ENCODE measurements at regions of chr13 and their contacts with region 1.

Region 1: DNA sequence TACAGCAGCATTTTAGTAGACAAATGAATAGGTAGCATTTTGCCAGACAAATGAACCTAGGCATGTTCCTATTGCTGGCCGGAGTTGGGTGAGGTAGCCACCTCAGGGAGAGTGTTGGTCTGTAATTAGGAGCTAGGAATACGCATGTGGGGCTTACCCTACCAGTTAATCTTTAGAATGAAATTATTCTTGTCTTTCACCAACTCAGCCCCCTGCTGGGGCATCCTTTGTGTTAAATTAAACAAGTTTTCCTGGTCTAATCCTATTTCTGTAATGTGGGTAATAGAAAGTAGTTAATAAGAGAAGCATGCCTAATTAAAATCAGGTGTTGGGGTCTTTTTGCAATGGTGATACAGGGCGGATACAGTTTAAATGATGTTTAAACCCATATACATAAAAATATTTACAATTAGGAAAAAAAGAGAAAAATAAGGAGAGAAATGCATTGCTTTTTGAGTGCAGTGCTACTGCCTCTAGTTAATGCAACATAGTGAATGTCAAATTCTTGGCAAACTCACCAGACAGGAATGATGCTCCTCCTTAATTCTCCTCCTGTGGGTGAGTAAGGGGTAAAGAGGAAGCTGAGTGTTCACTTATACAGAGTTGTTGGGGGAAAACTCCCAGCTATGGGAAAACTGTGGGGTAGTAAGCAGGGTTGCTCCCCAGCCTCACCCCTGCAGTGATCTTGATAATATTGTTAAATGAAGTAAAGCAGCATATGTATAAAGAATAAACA is 276.4 kb upstream of the EDNRB start:
- DNase-seq: no peak
- ATAC-seq: no peak
- H3K4me3 ChIP-seq: no peak overlapping the region
- H3K27ac ChIP-seq: no peak overlapping the region
- H3K4me1 ChIP-seq: no peaks in the 10 kb centered on the region
- H3K27me3 ChIP-seq: no peaks in the 10 kb centered on the region
- CTCF ChIP-seq: no peak
- EP300 ChIP-seq: no peak
- POLR2A ChIP-seq: no peak
- RAD21 ChIP-seq: no peak

Region 2: DNA sequence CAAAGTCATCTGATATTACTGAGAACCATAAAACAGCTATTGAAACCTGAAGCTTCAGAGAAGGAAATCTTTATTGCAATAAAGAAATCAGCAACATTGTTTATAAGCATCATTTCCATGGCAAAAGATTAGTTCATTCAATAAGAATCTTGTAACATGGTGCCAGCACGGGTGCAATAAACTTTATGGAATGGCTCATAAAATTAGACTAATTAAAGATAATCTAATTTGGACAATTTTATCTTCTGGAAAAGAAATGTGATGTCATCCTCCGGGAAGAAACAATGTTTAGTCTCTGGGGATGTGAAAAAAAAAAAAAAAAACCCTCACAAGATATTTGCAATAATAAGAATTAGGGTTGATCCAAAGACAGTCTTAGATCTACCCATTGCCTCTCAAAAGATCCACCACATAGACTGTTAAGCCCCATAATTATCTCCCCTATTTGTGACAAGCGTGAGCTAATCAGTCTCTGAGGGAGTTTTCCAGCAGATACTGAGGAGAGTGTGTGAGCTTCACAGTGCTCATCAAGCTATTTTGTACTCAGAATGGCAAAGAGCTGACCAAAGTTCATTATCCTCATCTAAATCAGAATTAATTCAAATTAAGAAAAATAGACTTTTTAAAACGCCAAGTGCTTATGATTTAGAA is 20.5 kb after region 1 on chr13:
- CTCF ChIA-PET with region 1: no interaction called
- POLR2A ChIA-PET with region 1: no interaction called
- in situ Hi-C with region 1: no loop called
- intact Hi-C with region 1: loop called (anchors 1 kb)
- DNase-seq: no peak
- ATAC-seq: no peak
- H3K4me3 ChIP-seq: no peak overlapping the region
- H3K27ac ChIP-seq: no peak overlapping the region
- H3K4me1 ChIP-seq: no peaks in the 10 kb centered on the region
- H3K27me3 ChIP-seq: no peaks in the 10 kb centered on the region
- CTCF ChIP-seq: no peak
- EP300 ChIP-seq: no peak
- POLR2A ChIP-seq: no peak
- RAD21 ChIP-seq: no peak

Region 3: DNA sequence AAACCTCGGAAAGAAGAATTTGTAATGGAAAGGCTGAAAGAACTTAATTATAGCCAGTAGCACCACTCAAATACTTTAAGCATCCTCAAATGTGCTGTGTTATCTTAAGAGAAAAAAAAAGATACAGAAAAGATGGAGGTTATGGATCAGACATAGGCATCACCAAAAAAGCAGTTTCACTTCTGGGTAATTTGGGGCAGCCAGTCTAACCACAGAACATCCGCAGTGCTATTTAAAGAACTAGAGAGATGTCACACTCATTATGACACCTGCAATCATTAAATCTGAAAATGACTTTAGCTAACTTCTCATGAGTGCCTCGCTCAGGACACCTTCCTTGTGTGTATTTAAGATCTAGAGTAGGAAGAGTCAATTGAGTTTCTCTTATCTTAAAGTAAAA is 999.2 kb after region 1 on chr13:
- CTCF ChIA-PET with region 1: no interaction called
- POLR2A ChIA-PET with region 1: no interaction called
- in situ Hi-C with region 1: no loop called
- intact Hi-C with region 1: no loop called
- DNase-seq: no peak
- ATAC-seq: no peak
- H3K4me3 ChIP-seq: no peak overlapping the region
- H3K27ac ChIP-seq: no peak overlapping the region
- H3K4me1 ChIP-seq: no peaks in the 10 kb centered on the region
- H3K27me3 ChIP-seq: no peaks in the 10 kb centered on the region; a peak in 1 of 5 replicates
- CTCF ChIP-seq: no peak
- EP300 ChIP-seq: no peak
- POLR2A ChIP-seq: no peak
- RAD21 ChIP-seq: no peak

Measured in HepG2 (cell line).